ENCODE measurements at regions of chr2 and their contacts with region 1.

Region 1: DNA sequence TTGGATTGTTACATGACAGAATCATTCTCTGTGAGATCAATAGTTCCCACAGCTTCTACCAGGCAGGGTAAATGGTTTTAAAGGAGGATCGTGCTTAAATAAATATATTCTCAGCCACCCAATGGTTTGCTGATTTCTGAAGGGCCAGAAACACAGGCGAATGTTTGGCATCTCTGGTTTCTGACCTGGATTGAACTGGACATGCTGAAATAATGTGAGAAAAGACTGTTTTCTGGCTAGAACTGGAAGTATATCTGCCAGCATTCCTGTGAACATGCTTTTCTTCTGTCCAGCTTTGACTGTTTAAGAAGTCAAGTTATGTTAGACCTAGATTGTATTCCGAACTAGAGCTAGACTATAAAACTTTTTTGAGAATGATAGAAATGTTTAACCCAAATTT is 77.1 kb upstream of the COL3A1 start:
- DNase-seq: no peak
- H3K4me3 ChIP-seq: no peak overlapping the region
- H3K27ac ChIP-seq: peak overlapping the region; percentile 56 to 67 (median 64)
- H3K4me1 ChIP-seq: peaks cover 0 to 11% (median 0%) of the 10 kb centered on the region in 4 donors
- H3K27me3 ChIP-seq: no peaks in the 10 kb centered on the region
- CTCF ChIP-seq: no peak
- EP300 ChIP-seq: no peak
- POLR2A ChIP-seq: no peak

Region 2: GRCh38 chr2:188813857-188814256 is 83.2 kb before region 1 on chr2:
- in situ Hi-C with region 1: no loop called
- intact Hi-C with region 1: no loop called
- DNase-seq: peak; percentile 9
- H3K4me3 ChIP-seq: no peak overlapping the region
- H3K27ac ChIP-seq: peak overlapping the region in 3 of 4 donors; percentile 6 to 13 (median 10)
- H3K4me1 ChIP-seq: peaks cover 0 to 6% (median 2%) of the 10 kb centered on the region in 4 donors
- H3K27me3 ChIP-seq: no peaks in the 10 kb centered on the region
- CTCF ChIP-seq: no peak
- EP300 ChIP-seq: no peak
- POLR2A ChIP-seq: no peak

Region 3: GRCh38 chr2:188969236-188969635 is 72.1 kb after region 1 on chr2:
- in situ Hi-C with region 1: no loop called
- intact Hi-C with region 1: loop called (anchors 10 kb)
- DNase-seq: no peak
- H3K4me3 ChIP-seq: no peak overlapping the region
- H3K27ac ChIP-seq: peak overlapping the region; percentile 56 to 88 (median 79)
- H3K4me1 ChIP-seq: peaks cover 0 to 4% (median 1%) of the 10 kb centered on the region in 4 donors
- H3K27me3 ChIP-seq: no peaks in the 10 kb centered on the region
- CTCF ChIP-seq: no peak
- EP300 ChIP-seq: no peak
- POLR2A ChIP-seq: no peak

Region 4: GRCh38 chr2:190301032-190301431 is 1403.9 kb after region 1 on chr2:
- in situ Hi-C with region 1: no loop called
- intact Hi-C with region 1: no loop called
- DNase-seq: no peak
- H3K4me3 ChIP-seq: no peak overlapping the region
- H3K27ac ChIP-seq: no peak overlapping the region
- H3K4me1 ChIP-seq: no peaks in the 10 kb centered on the region
- H3K27me3 ChIP-seq: no peaks in the 10 kb centered on the region
- CTCF ChIP-seq: no peak
- EP300 ChIP-seq: no peak
- POLR2A ChIP-seq: no peak